Activated CD4-positive, alpha-beta T cell treated with anti-CD3 and anti-CD28 coated beads, Interleukin-2, amount 10 ng/mL, durations not matched to agents 24 days and 14 days (primary cell): ENCODE measurements at regions of chr18 and their contacts with region 1.

Region 1: GRCh38 chr18:12236934-12237832 is 17.0 kb upstream of the CIDEA start:
- DNase-seq: peak; percentile 91
- H3K4me3 Mint-ChIP-seq: no peak overlapping the region
- H3K27ac Mint-ChIP-seq: no peak overlapping the region
- H3K4me1 Mint-ChIP-seq: peaks cover 7% of the 10 kb centered on the region
- H3K27me3 Mint-ChIP-seq: peaks cover 23% of the 10 kb centered on the region

Region 2: DNA sequence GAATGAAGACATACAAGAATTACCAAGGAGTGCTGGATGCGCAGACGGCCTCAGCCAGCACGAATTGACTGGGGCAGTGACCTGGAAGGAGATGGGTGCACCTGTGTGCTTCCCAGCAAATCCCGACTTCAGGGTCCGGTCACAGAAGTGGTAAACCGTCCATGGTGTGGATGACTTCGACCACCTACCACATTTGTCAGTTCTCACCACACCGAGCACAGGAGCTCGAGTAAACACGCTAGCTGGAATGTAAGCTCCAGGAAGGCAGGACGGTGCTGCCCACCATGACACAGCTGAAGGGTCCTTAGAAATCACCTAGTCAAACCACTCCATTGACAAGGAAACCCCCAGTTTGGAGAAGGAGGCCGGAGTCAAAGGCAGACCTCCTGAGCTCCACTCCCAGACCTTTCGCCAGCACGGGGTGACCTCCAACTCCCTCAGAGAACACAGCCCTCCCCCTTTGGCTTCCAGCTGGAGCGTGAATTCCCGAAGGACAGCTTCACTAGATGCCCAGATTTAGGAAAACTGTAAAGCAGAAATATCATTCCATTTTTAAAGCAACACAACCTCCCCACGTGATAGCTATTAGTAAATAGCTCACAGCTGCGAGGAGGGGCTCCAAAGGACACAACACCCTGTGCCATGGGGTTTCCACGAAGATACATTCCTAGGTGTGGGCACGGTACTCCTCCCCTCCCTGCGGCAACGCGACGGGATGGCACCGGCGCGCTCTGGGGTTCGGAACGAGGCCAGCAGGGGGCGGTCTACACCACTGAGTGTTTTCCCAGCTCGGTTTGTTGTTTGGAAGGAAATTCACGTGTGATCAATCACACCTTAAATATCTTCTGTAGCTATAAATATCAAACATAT is 582.2 kb before region 1 on chr18:
- intact Hi-C with region 1: loop called (anchors 5 kb)
- DNase-seq: peak; percentile 81
- H3K4me3 Mint-ChIP-seq: no peak overlapping the region
- H3K27ac Mint-ChIP-seq: no peak overlapping the region
- H3K4me1 Mint-ChIP-seq: peaks cover 3% of the 10 kb centered on the region
- H3K27me3 Mint-ChIP-seq: peaks cover 22% of the 10 kb centered on the region

Region 3: GRCh38 chr18:12092398-12093229 is 144.6 kb before region 1 on chr18:
- intact Hi-C with region 1: loop called (anchors 2 kb)
- DNase-seq: no peak
- H3K4me3 Mint-ChIP-seq: no peak overlapping the region
- H3K27ac Mint-ChIP-seq: no peak overlapping the region
- H3K4me1 Mint-ChIP-seq: no peaks in the 10 kb centered on the region
- H3K27me3 Mint-ChIP-seq: peaks cover 2% of the 10 kb centered on the region

Region 4: DNA sequence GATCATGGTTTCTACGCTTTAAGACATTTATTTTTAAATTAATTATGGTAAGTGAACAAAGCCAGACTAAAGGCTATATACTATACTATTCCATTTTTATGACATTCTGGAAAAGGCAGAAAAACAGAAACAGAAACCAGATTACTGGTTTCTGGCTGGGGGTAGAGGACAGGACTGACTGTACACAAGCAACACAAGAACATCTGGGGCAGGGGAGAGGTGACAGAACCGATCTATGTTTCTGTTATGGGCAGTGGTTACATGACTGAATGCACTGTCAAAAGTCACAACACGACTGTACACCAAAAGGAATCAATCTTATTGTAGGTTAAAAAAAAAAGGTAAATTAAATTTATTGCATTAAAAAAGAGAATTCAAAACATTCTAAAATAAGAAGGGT is 582.1 kb after region 1 on chr18:
- intact Hi-C with region 1: no loop called
- DNase-seq: peak; percentile 77
- H3K4me3 Mint-ChIP-seq: peak overlapping the region; percentile 47
- H3K27ac Mint-ChIP-seq: peak overlapping the region; percentile 54
- H3K4me1 Mint-ChIP-seq: peaks cover 39% of the 10 kb centered on the region
- H3K27me3 Mint-ChIP-seq: no peaks in the 10 kb centered on the region